ENCODE measurements at regions of chr6 and their contacts with region 1.

Region 1: GRCh38 chr6:3410385-3411360 is 46.2 kb downstream of the SLC22A23 start:
- DNase-seq: peak; percentile 62
- H3K4me3 ChIP-seq: no peak overlapping the region; a peak in 1 of 4 replicates
- H3K27ac ChIP-seq: no peak overlapping the region
- H3K4me1 ChIP-seq: no peaks in the 10 kb centered on the region
- H3K27me3 ChIP-seq: peaks cover 49% of the 10 kb centered on the region; the same call in 1 of the 2 replicates
- CTCF ChIP-seq: peak; percentile 75
- EP300 ChIP-seq: no peak
- RAD21 ChIP-seq: peak; percentile 57

Region 2: GRCh38 chr6:3421791-3422434 is 11.2 kb after region 1 on chr6:
- CTCF ChIA-PET with region 1: interaction called, 11 read pairs
- POLR2A ChIA-PET with region 1: no interaction called
- DNase-seq: no peak
- H3K4me3 ChIP-seq: no peak overlapping the region
- H3K27ac ChIP-seq: no peak overlapping the region
- H3K4me1 ChIP-seq: peaks cover 0 to 2% of the 10 kb centered on the region in 2 experiments; a peak in 1 of 4 replicates
- H3K27me3 ChIP-seq: peaks cover 47% of the 10 kb centered on the region
- CTCF ChIP-seq: no peak
- EP300 ChIP-seq: no peak
- RAD21 ChIP-seq: no peak